Endothelial cell of umbilical vein (primary cell): ENCODE measurements at regions of chr11 and their contacts with region 1.

Region 1: DNA sequence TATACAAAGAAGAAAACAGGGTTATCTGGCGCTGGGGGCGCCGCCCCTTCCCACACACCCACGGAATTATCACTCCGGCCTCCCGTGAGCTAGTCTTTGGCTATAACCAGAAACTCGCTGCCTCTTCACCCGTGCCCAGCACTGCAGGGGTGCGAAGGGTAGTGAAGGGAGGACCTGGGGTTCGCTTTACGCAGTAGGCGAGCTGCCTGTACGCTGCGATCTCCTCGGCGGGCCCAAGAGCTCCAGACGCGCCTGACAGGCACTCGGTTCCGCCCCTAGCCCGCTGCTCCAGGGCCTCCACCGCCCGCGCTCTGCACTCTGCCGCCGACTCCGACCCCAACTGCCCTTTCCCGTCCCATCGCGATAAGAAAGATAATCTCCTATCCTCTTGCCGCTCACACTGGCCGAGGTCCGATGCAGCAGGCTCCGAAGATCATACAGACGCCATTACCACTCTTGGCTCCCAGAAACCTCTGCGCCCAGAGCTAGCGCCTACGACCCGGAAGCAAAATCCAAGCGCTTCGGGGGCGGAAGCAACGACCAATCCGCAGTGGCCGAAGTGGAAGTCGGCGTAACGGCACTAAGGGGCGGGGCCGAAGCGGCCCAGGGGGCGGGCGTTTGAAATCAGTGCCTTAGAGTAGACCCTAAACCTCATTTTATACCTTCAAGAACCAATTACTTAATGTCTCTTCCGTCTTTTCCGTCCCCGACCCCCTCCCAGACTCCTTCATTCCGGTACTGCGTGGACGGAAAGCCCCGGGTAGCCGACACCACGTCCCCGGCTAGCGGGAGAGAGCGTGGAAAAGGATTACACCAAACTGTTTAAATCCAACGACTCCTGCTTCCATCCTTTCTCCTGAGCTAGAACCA is at the starts of genes CWC15 and KDM4D:
- DNase-seq: peak; percentile 95
- H3K4me3 ChIP-seq: peak within 1 kb of the TSS; percentile 77 to 94 (median 92)
- H3K27ac ChIP-seq: peak within 1 kb of the TSS; percentile 76
- H3K4me1 ChIP-seq: peaks cover 9% of the 10 kb centered on the region
- H3K27me3 ChIP-seq: no peaks in the 10 kb centered on the region
- CTCF ChIP-seq: no peak
- POLR2A ChIP-seq: peak; percentile 91
- total RNA-seq, gene CWC15: 72.0 and 75.6 TPM in 2 replicates
- total RNA-seq, gene KDM4D: 1.0 and 1.3 TPM in 2 replicates

Region 2: GRCh38 chr11:94543695-94544645 is 429.4 kb before region 1 on chr11 and contains the start of gene FUT4:
- CTCF ChIA-PET with region 1: no interaction called
- POLR2A ChIA-PET with region 1: no interaction called
- dilution Hi-C with region 1: no loop called
- intact Hi-C with region 1: loop called (anchors 2 kb)
- DNase-seq: peak; percentile 80
- H3K4me3 ChIP-seq: peak within 1 kb of the TSS; percentile 11 to 57 (median 41)
- H3K27ac ChIP-seq: peak within 1 kb of the TSS; percentile 55
- H3K4me1 ChIP-seq: peaks cover 12% of the 10 kb centered on the region
- H3K27me3 ChIP-seq: peaks cover 4 to 9% of the 10 kb centered on the region in 2 experiments
- CTCF ChIP-seq: no peak
- POLR2A ChIP-seq: peak; percentile 76
- total RNA-seq, gene FUT4: 4.4 and 5.3 TPM in 2 replicates

Region 3: GRCh38 chr11:94794287-94795168 is 178.8 kb before region 1 on chr11:
- CTCF ChIA-PET with region 1: no interaction called
- POLR2A ChIA-PET with region 1: no interaction called
- dilution Hi-C with region 1: no loop called
- intact Hi-C with region 1: loop called (anchors 2 kb)
- DNase-seq: peak; percentile 93
- H3K4me3 ChIP-seq: peak overlapping the region in 2 of 3 experiments; percentile 4 to 15
- H3K27ac ChIP-seq: peak overlapping the region; percentile 90
- H3K4me1 ChIP-seq: peaks cover 44% of the 10 kb centered on the region
- H3K27me3 ChIP-seq: no peaks in the 10 kb centered on the region
- CTCF ChIP-seq: no peak
- POLR2A ChIP-seq: no peak

Region 4: GRCh38 chr11:94926698-94927237 is 46.6 kb before region 1 on chr11:
- CTCF ChIA-PET with region 1: interaction called, 11 read pairs
- POLR2A ChIA-PET with region 1: interaction called, 5 read pairs
- dilution Hi-C with region 1: no loop called
- intact Hi-C with region 1: loop called (anchors 5 kb)
- DNase-seq: peak; percentile 94
- H3K4me3 ChIP-seq: no peak overlapping the region
- H3K27ac ChIP-seq: peak overlapping the region; percentile 92
- H3K4me1 ChIP-seq: peaks cover 39% of the 10 kb centered on the region
- H3K27me3 ChIP-seq: no peaks in the 10 kb centered on the region
- CTCF ChIP-seq: no peak
- POLR2A ChIP-seq: peak; percentile 43

Region 5: GRCh38 chr11:95790123-95790932 is 817.0 kb after region 1 on chr11 and contains the start of gene CEP57:
- CTCF ChIA-PET with region 1: no interaction called
- POLR2A ChIA-PET with region 1: no interaction called
- dilution Hi-C with region 1: no loop called
- intact Hi-C with region 1: loop called (anchors 1 kb)
- DNase-seq: peak; percentile 97
- H3K4me3 ChIP-seq: peak within 1 kb of the TSS; percentile 75 to 85 (median 84)
- H3K27ac ChIP-seq: peak within 1 kb of the TSS; percentile 90
- H3K4me1 ChIP-seq: peaks cover 21% of the 10 kb centered on the region
- H3K27me3 ChIP-seq: no peaks in the 10 kb centered on the region
- CTCF ChIP-seq: no peak
- POLR2A ChIP-seq: peak; percentile 79
- total RNA-seq, gene CEP57: 35.2 and 38.5 TPM in 2 replicates